Gastrocnemius medialis (tissue), 4 donors: ENCODE measurements at regions of chr3 and their contacts with region 1.

Region 1: GRCh38 chr3:52056968-52057805 is 816 bp upstream of the DUSP7 start:
- DNase-seq: peak; percentile 99 to 100
- ATAC-seq: peak; percentile 83 to 84
- H3K4me3 ChIP-seq: peak overlapping the region; percentile 63 to 93 (median 76)
- H3K27ac ChIP-seq: peak overlapping the region; percentile 92 to 98 (median 94)
- H3K4me1 ChIP-seq: peaks cover 30 to 35% of the 10 kb centered on the region in 2 donors
- H3K27me3 ChIP-seq: no peaks in the 10 kb centered on the region
- CTCF ChIP-seq: peak in 2 of 5 experiments; percentile 11 to 27
- POLR2A ChIP-seq: peak; percentile 58 to 71

Region 2: DNA sequence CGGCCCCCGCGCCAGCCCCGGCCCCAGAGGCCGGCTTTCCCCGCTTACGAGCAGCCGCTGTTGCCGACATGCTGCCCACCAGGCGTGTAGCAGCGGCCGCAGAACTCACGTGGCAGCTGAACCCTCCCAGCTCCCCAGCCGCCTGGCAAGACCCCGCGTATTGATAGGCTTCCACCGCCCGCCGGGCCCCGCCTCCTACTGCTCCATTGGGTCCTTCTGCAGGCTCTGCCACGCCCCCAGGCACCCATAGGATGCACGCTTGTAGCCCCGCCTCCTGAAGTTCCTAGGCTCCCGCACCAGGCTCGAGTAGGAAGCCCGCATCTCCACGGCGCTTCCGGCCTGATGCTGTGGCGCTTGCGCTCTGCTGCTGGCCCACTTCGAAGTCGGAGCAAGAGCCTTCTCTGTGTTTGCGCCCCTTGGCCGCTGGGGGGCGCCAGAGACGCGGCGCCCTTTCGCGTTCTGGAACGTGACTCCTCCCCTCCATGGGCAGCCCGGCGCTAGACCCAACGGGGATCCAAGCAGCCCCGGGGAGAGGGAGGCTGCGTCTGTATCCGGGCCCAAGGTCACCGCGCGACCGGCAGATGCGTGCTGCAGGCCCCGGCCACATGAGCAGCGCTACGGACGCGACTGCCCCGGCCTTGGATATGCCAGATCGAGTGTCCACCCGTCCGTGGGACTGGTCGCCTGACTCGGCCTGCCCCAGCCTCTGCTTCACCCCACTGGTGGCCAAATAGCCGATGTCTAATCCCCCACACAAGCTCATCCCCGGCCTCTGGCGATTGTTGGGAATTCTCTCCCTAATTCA is 115.2 kb before region 1 on chr3 and contains the starts of genes PARP3 and RRP9:
- in situ Hi-C with region 1: no loop called
- intact Hi-C with region 1: loop called (anchors 1 kb)
- DNase-seq: peak; percentile 100
- ATAC-seq: peak; percentile 90 to 94
- H3K4me3 ChIP-seq: peak within 1 kb of the TSS; percentile 83 to 94 (median 90)
- H3K27ac ChIP-seq: peak within 1 kb of the TSS; percentile 92 to 100 (median 95)
- H3K4me1 ChIP-seq: peaks cover 23 to 29% of the 10 kb centered on the region in 2 donors
- H3K27me3 ChIP-seq: no peaks in the 10 kb centered on the region
- CTCF ChIP-seq: peak; percentile 98 to 100 (median 100)
- POLR2A ChIP-seq: peak; percentile 75 to 81
- total RNA-seq, gene PARP3: 10.9 to 19.0 (median 11.4) TPM
- total RNA-seq, gene RRP9: 19.2 to 25.9 (median 24.9) TPM

Region 3: DNA sequence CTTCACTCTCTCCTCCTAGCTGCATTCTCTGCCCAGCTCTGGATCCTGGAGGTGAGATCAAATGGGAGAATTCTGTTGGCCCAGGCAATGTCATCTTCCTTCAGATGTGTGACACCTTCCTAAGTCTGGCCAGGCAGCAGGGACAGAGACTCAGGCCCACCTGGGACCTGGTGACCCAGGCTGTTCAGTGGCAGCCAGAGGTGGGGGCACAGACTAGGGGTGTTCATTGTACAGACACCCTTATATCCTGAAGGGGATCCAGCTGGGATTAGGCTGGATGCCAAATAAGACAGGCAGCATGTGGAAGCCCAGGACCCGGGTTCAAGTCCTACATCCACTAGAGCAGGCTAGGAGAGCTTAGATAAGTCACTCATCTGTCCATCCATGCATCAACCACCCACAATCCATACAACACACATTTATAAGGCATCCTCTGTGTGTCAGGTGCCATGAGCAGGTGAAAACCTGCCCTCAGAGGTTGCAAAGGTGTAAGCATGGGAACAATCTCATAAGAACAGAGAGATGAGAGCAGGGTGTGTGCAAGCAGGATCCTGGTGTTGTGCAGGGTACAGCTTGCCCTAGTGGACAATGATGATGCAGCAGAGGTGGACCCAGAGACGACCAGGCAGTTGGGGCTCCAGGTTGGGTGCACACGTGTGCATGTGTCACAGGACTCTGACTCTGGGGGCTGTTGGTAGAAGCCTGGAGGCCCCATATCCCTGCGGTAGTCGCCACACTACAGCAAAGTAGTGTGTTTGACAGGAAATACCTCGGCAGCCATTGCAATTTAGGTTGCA is 43.2 kb before region 1 on chr3:
- in situ Hi-C with region 1: loop called in 2 of 4 experiments (anchors 10 kb)
- intact Hi-C with region 1: loop called (anchors 2 kb)
- DNase-seq: no peak
- ATAC-seq: no peak
- H3K4me3 ChIP-seq: no peak overlapping the region
- H3K27ac ChIP-seq: peak overlapping the region; percentile 95 to 98 (median 96)
- H3K4me1 ChIP-seq: peaks cover 50 to 73% of the 10 kb centered on the region in 2 donors
- H3K27me3 ChIP-seq: no peaks in the 10 kb centered on the region
- CTCF ChIP-seq: no peak
- POLR2A ChIP-seq: no peak

Region 4: DNA sequence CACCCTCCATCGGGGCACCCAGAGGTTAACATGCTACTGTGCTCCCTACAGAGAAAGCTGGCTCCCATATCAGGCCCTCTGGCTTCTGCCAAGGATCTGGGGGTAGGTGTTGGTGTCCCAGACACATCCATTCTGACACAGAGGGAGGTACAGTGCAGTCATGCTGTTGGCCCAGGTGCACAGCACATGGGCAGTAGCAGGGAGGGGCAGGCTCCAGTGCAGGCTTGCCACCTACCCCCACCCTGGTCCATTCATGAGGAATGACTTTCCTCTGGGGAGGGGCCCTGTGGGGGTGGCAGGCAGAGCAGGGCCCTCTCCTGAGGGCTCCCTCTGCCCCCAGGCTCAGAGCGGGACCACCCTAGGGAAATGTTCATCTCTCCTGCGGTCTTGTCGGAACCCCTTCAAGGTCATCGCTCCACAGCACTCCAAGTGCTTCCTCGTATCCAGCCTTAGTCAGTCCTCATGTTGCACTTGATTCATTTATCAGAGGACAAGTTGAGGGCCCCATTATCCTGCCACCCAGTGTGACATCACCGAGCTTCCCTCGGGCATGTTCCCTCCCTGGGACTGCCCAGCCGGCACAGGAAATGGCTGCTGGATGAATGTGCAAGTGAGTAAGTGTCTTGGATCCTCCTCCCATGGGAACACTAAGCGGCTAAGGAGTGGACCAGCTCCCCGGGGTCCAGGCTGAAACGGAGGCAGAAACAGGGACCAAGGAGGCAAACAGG is 10.8 kb before region 1 on chr3:
- in situ Hi-C with region 1: no loop called
- intact Hi-C with region 1: no loop called
- DNase-seq: no peak
- ATAC-seq: peak; percentile 25 to 37
- H3K4me3 ChIP-seq: no peak overlapping the region
- H3K27ac ChIP-seq: peak overlapping the region; percentile 3 to 66 (median 48)
- H3K4me1 ChIP-seq: peaks cover 29 to 41% of the 10 kb centered on the region in 2 donors
- H3K27me3 ChIP-seq: no peaks in the 10 kb centered on the region
- CTCF ChIP-seq: no peak
- POLR2A ChIP-seq: no peak

Region 5: GRCh38 chr3:52123106-52123725 is 66.0 kb after region 1 on chr3:
- in situ Hi-C with region 1: no loop called
- intact Hi-C with region 1: loop called (anchors 1 kb)
- DNase-seq: peak; percentile 33 to 60
- ATAC-seq: peak; percentile 74 to 89
- H3K4me3 ChIP-seq: no peak overlapping the region
- H3K27ac ChIP-seq: peak overlapping the region in 3 of 4 donors; percentile 54 to 68 (median 67)
- H3K4me1 ChIP-seq: peaks cover 4 to 20% of the 10 kb centered on the region in 2 donors
- H3K27me3 ChIP-seq: no peaks in the 10 kb centered on the region
- CTCF ChIP-seq: peak; percentile 88 to 95 (median 93)
- POLR2A ChIP-seq: no peak

Region 6: GRCh38 chr3:52154117-52155094 is 97.2 kb after region 1 on chr3 and contains the start of gene POC1A:
- in situ Hi-C with region 1: loop called in 2 of 4 experiments (anchors 10 kb)
- intact Hi-C with region 1: loop called (anchors 1 kb)
- DNase-seq: peak; percentile 97 to 99
- ATAC-seq: peak; percentile 99
- H3K4me3 ChIP-seq: peak within 1 kb of the TSS; percentile 65 to 87 (median 82)
- H3K27ac ChIP-seq: peak within 1 kb of the TSS; percentile 84 to 97 (median 96)
- H3K4me1 ChIP-seq: peaks cover 8 to 10% of the 10 kb centered on the region in 2 donors
- H3K27me3 ChIP-seq: no peaks in the 10 kb centered on the region
- CTCF ChIP-seq: peak in 4 of 5 experiments; percentile 30 to 46 (median 40)
- POLR2A ChIP-seq: peak; percentile 61 to 87
- total RNA-seq, gene POC1A: 0.51 to 3.2 (median 0.81) TPM